PC-3 (cell line): ENCODE measurements at regions of chr4 and their contacts with region 1.

Region 1: GRCh38 chr4:77525538-77525937 is 80.1 kb upstream of the CXCL13 start:
- DNase-seq: peak; percentile 67
- ATAC-seq: peak; percentile 87
- H3K4me3 ChIP-seq: no peak overlapping the region
- H3K27ac ChIP-seq: peak overlapping the region; percentile 68
- H3K4me1 ChIP-seq: peaks cover 22% of the 10 kb centered on the region
- H3K27me3 ChIP-seq: no peaks in the 10 kb centered on the region
- CTCF ChIP-seq: no peak

Region 2: DNA sequence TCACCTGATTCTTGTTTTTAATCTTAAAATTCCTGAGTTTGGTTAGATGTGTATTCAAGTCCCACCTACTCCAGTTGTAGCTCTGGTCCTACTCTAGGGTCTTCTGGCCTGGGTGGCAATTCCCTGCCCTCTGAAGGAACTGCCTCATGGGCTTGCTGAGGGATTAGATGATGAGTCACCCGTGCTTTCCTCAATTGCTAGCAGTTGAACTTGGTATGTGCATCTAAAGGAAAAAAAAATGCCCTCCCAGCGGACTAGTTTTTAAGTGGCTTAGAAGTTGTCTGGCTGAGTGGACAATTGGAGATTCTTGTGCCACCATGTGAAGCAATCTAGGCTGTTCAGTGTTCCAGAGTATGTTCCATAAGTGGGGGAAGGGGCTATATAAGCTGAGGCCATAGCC is 241.5 kb before region 1 on chr4:
- CTCF ChIA-PET with region 1: no interaction called
- POLR2A ChIA-PET with region 1: no interaction called
- intact Hi-C with region 1: no loop called
- DNase-seq: no peak
- ATAC-seq: no peak
- H3K4me3 ChIP-seq: no peak overlapping the region
- H3K27ac ChIP-seq: no peak overlapping the region
- H3K4me1 ChIP-seq: no peaks in the 10 kb centered on the region
- H3K27me3 ChIP-seq: peaks cover 6% of the 10 kb centered on the region; the same call in 1 of the 2 replicates
- CTCF ChIP-seq: no peak

Region 3: GRCh38 chr4:77579406-77580076 is 54.0 kb after region 1 on chr4:
- CTCF ChIA-PET with region 1: no interaction called
- POLR2A ChIA-PET with region 1: no interaction called
- intact Hi-C with region 1: loop called (anchors 2 kb)
- DNase-seq: peak; percentile 83
- ATAC-seq: peak; percentile 96
- H3K4me3 ChIP-seq: peak overlapping the region; percentile 23
- H3K27ac ChIP-seq: peak overlapping the region; percentile 93
- H3K4me1 ChIP-seq: peaks cover 40% of the 10 kb centered on the region
- H3K27me3 ChIP-seq: no peaks in the 10 kb centered on the region
- CTCF ChIP-seq: no peak